Natural killer cell (primary cell): ENCODE measurements at regions of chr3 and their contacts with region 1.

Region 1: DNA sequence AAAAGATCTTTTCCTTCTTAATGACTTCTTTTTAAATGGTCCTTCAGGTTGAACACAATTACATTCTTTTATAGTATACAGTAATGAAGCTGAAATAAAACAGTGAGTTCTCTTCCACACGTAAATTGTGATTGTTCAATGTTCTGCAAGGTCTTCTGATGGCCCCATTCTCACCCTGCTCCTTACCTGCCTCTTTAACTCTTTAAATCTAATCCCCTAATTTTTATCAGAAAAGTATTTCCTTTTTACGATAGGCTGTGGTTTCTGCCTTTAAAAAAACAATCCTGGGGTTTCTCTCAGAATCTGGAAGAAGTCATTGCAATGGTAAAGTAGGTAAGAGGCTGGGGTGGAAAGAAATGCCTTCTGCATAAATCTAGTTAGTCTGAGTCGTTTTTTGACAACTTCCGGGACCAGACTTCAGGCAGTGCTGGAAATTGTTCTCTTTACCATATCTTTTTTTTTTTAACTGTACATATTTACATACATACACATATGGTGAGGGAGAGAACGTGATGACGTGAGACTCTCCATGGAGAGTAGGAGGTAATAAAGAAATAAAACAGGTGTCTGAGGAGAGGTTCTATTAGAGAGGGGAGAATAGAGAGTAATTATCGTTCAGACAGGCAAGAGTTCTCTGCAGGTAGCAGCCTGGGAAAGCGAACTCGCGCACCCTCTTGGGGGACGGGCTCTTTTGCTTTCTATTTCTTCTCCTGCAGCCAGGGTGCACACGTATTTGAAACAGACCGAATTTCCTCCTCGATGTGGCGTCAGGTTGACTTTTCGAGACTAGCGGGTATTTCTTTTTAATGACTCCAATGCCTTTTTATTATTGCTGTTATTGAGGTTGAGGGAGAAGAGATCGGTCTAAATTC is at the start of gene SIDT1:
- DNase-seq: peak; percentile 58 to 89
- ATAC-seq: peak; percentile 72 to 84 (median 77)
- H3K4me3 ChIP-seq: peak within 1 kb of the TSS; percentile 87
- H3K4me3 Mint-ChIP-seq: peak within 1 kb of the TSS; percentile 97
- H3K27ac ChIP-seq: peak within 1 kb of the TSS; percentile 95
- H3K27ac Mint-ChIP-seq: peak within 1 kb of the TSS; percentile 98 to 100
- H3K4me1 ChIP-seq: peaks cover 30% of the 10 kb centered on the region
- H3K4me1 Mint-ChIP-seq: peaks cover 51 to 55% of the 10 kb centered on the region in 2 donors
- H3K27me3 ChIP-seq: no peaks in the 10 kb centered on the region
- H3K27me3 Mint-ChIP-seq: peaks cover 6 to 10% of the 10 kb centered on the region in 2 donors
- CTCF ChIP-seq: no peak
- total RNA-seq, gene SIDT1: 86.9 to 136 (median 101) TPM

Region 2: GRCh38 chr3:113354307-113354706 is 177.8 kb before region 1 on chr3:
- intact Hi-C with region 1: no loop called
- DNase-seq: no peak
- ATAC-seq: no peak
- H3K4me3 ChIP-seq: no peak overlapping the region
- H3K4me3 Mint-ChIP-seq: no peak overlapping the region
- H3K27ac ChIP-seq: no peak overlapping the region
- H3K27ac Mint-ChIP-seq: no peak overlapping the region
- H3K4me1 ChIP-seq: no peaks in the 10 kb centered on the region
- H3K4me1 Mint-ChIP-seq: no peaks in the 10 kb centered on the region
- H3K27me3 ChIP-seq: no peaks in the 10 kb centered on the region
- H3K27me3 Mint-ChIP-seq: no peaks in the 10 kb centered on the region
- CTCF ChIP-seq: no peak

Region 3: GRCh38 chr3:113485161-113485609 is 46.9 kb before region 1 on chr3:
- intact Hi-C with region 1: loop called (anchors 2 kb)
- DNase-seq: peak; percentile 64 to 69
- ATAC-seq: peak; percentile 82 to 88 (median 88)
- H3K4me3 ChIP-seq: peak overlapping the region; percentile 19
- H3K4me3 Mint-ChIP-seq: peak overlapping the region; percentile 81
- H3K27ac ChIP-seq: peak overlapping the region; percentile 72
- H3K27ac Mint-ChIP-seq: peak overlapping the region; percentile 84 to 95
- H3K4me1 ChIP-seq: peaks cover 12% of the 10 kb centered on the region
- H3K4me1 Mint-ChIP-seq: peaks cover 41 to 48% of the 10 kb centered on the region in 2 donors
- H3K27me3 ChIP-seq: no peaks in the 10 kb centered on the region
- H3K27me3 Mint-ChIP-seq: no peaks in the 10 kb centered on the region
- CTCF ChIP-seq: no peak

Region 4: GRCh38 chr3:113495035-113495434 is 37.0 kb before region 1 on chr3:
- intact Hi-C with region 1: loop called (anchors 5 kb)
- DNase-seq: peak in 1 of 2 donors; percentile 71
- ATAC-seq: peak in 1 of 3 donors; percentile 52
- H3K4me3 ChIP-seq: no peak overlapping the region
- H3K4me3 Mint-ChIP-seq: no peak overlapping the region
- H3K27ac ChIP-seq: no peak overlapping the region
- H3K27ac Mint-ChIP-seq: no peak overlapping the region
- H3K4me1 ChIP-seq: no peaks in the 10 kb centered on the region
- H3K4me1 Mint-ChIP-seq: peaks cover 2 to 3% of the 10 kb centered on the region in 2 donors
- H3K27me3 ChIP-seq: no peaks in the 10 kb centered on the region
- H3K27me3 Mint-ChIP-seq: no peaks in the 10 kb centered on the region
- CTCF ChIP-seq: peak; percentile 44

Region 5: DNA sequence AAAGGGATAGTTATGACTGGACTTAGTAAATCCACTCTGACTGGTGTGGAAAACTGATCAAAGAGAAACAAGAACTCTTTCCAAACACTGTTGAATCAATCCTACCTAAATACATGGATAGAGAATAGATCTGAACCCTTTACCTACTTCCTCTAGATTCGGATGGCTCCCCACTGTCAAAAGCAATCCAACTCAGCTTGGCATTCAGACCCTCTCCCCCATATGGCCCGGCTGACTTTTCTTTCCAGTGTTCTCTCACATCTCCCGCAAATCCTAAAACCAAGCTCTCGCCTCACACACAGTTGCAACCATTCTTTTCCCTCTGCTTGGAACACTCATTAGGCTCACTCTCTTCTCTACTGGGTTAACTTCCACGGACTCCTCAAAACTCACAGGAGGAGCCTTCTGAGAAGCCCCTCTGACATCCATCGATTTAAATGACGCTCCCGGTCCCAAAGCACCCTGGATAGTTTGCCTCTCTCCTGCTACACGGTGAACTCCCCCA is 17.7 kb before region 1 on chr3:
- intact Hi-C with region 1: loop called (anchors 1 kb)
- DNase-seq: no peak
- ATAC-seq: no peak
- H3K4me3 ChIP-seq: peak overlapping the region; percentile 90
- H3K4me3 Mint-ChIP-seq: no peak overlapping the region
- H3K27ac ChIP-seq: peak overlapping the region; percentile 80
- H3K27ac Mint-ChIP-seq: no peak overlapping the region
- H3K4me1 ChIP-seq: peaks cover 11% of the 10 kb centered on the region
- H3K4me1 Mint-ChIP-seq: peaks cover 6 to 8% of the 10 kb centered on the region in 2 donors
- H3K27me3 ChIP-seq: no peaks in the 10 kb centered on the region
- H3K27me3 Mint-ChIP-seq: peaks cover 19 to 27% of the 10 kb centered on the region in 2 donors
- CTCF ChIP-seq: no peak

Region 6: GRCh38 chr3:113552851-113553250 is 20.8 kb after region 1 on chr3:
- intact Hi-C with region 1: loop called (anchors 1 kb)
- DNase-seq: peak in 1 of 2 donors; percentile 70
- ATAC-seq: peak; percentile 61 to 87 (median 80)
- H3K4me3 ChIP-seq: no peak overlapping the region
- H3K4me3 Mint-ChIP-seq: no peak overlapping the region
- H3K27ac ChIP-seq: no peak overlapping the region
- H3K27ac Mint-ChIP-seq: peak overlapping the region; percentile 6 to 15
- H3K4me1 ChIP-seq: no peaks in the 10 kb centered on the region
- H3K4me1 Mint-ChIP-seq: peaks cover 55 to 60% of the 10 kb centered on the region in 2 donors
- H3K27me3 ChIP-seq: no peaks in the 10 kb centered on the region
- H3K27me3 Mint-ChIP-seq: no peaks in the 10 kb centered on the region
- CTCF ChIP-seq: peak; percentile 15

Region 7: DNA sequence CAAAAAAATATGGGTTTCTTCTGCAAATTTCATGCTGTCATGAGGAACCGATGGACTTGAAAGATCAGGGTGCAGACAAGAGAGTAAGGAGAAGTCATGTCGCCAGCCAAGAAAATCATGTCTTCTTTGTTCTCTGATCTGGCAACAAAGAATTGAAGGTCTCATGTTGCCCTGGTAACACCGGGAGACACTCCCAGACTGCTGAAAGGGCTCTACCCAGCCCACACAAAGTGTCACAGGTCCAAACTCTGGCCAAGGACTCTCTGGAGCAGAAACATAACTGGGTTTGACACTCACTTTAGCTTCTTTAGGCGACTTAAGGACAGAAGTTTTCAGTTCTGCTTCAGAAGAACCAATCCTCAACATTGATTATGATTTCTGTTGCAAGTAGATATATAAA is 43.1 kb after region 1 on chr3:
- intact Hi-C with region 1: loop called (anchors 5 kb)
- DNase-seq: no peak
- ATAC-seq: no peak
- H3K4me3 ChIP-seq: no peak overlapping the region
- H3K4me3 Mint-ChIP-seq: no peak overlapping the region
- H3K27ac ChIP-seq: no peak overlapping the region
- H3K27ac Mint-ChIP-seq: peak overlapping the region; percentile 27 to 68
- H3K4me1 ChIP-seq: no peaks in the 10 kb centered on the region
- H3K4me1 Mint-ChIP-seq: peaks cover 19 to 30% of the 10 kb centered on the region in 2 donors
- H3K27me3 ChIP-seq: no peaks in the 10 kb centered on the region
- H3K27me3 Mint-ChIP-seq: no peaks in the 10 kb centered on the region
- CTCF ChIP-seq: no peak

Region 8: GRCh38 chr3:113696658-113697499 is 164.8 kb after region 1 on chr3:
- intact Hi-C with region 1: loop called (anchors 2 kb)
- DNase-seq: peak; percentile 99
- ATAC-seq: peak; percentile 86 to 95 (median 87)
- H3K4me3 ChIP-seq: peak overlapping the region; percentile 83
- H3K4me3 Mint-ChIP-seq: no peak overlapping the region
- H3K27ac ChIP-seq: peak overlapping the region; percentile 90
- H3K27ac Mint-ChIP-seq: no peak overlapping the region
- H3K4me1 ChIP-seq: peaks cover 9% of the 10 kb centered on the region
- H3K4me1 Mint-ChIP-seq: peaks cover 20 to 21% of the 10 kb centered on the region in 2 donors
- H3K27me3 ChIP-seq: no peaks in the 10 kb centered on the region
- H3K27me3 Mint-ChIP-seq: no peaks in the 10 kb centered on the region
- CTCF ChIP-seq: no peak